ENCODE measurements at regions of chrX and their contacts with region 1.

Region 1: GRCh38 chrX:119880552-119881437 is 9.2 kb downstream of the NDUFA1 start:
- DNase-seq: peak; percentile 16
- H3K4me3 ChIP-seq: no peak overlapping the region
- H3K27ac ChIP-seq: no peak overlapping the region
- H3K4me1 ChIP-seq: no peaks in the 10 kb centered on the region
- H3K27me3 ChIP-seq: no peaks in the 10 kb centered on the region
- CTCF ChIP-seq: peak; percentile 43 to 54 (median 47)
- EP300 ChIP-seq: no peak
- POLR2A ChIP-seq: no peak

Region 2: DNA sequence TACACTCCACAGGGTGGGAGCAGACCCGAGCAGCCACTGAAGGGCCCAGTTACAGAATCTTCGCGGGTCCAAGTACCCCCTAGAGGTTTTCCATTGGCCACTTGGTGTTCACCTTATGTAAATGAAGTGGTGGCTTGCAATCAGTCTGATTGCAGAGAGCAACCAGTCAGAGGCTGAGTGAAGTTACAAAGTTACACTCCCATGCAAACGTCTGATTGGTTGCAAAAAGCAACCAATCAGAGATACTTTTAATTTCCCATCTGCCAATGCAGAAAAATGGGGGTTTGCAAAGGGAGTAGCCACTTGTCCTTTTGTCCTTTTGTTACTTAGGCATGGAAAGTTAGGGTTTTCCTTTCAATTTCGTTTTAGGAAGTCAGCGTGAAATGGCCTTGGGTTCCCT is 89.8 kb after region 1 on chrX:
- in situ Hi-C with region 1: no loop called
- intact Hi-C with region 1: no loop called
- DNase-seq: no peak
- H3K4me3 ChIP-seq: no peak overlapping the region
- H3K27ac ChIP-seq: no peak overlapping the region
- H3K4me1 ChIP-seq: no peaks in the 10 kb centered on the region
- H3K27me3 ChIP-seq: no peaks in the 10 kb centered on the region
- CTCF ChIP-seq: no peak
- EP300 ChIP-seq: no peak
- POLR2A ChIP-seq: no peak

Region 3: DNA sequence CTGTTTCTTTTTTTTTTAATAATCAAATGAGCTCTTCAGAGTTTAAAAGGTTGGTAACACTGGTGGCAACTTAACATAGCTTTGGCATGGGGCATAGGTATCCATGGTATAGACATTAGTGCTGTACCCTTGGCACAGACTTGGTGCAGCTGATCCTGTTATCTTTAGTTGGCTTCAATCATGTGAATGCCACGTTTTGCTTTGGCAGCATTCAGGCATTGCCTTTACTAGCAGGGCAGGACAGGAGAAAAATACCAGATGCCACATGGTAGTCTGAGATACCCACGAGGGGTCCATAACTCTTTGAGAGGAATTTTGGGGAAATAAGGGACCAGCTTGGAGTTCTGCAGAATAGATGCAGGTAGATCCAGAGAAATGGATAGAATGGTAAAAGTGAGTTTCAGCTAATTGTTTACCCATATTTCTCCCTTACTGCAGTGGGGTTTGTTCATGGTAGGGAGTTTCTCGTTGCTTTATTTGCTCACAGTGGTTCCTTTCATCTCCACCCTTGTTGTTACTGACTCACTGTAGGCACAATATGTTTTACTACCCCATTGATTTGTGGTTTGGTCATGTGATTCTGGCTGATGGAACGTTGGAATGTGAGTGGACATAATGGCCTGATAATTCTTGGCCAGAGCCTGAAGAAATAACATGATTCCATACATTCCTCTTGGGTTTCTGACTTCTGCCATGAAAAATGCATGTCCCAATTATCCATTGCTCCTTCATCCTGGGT is 1509.3 kb after region 1 on chrX:
- in situ Hi-C with region 1: no loop called
- intact Hi-C with region 1: loop called (anchors 5 kb)
- DNase-seq: no peak
- H3K4me3 ChIP-seq: no peak overlapping the region
- H3K27ac ChIP-seq: peak overlapping the region in 1 of 4 donors; percentile 26
- H3K4me1 ChIP-seq: no peaks in the 10 kb centered on the region
- H3K27me3 ChIP-seq: no peaks in the 10 kb centered on the region
- CTCF ChIP-seq: no peak
- EP300 ChIP-seq: no peak
- POLR2A ChIP-seq: no peak